Lower leg skin (tissue), 4 donors: ENCODE measurements at regions of chr3 and their contacts with region 1.

Region 1: DNA sequence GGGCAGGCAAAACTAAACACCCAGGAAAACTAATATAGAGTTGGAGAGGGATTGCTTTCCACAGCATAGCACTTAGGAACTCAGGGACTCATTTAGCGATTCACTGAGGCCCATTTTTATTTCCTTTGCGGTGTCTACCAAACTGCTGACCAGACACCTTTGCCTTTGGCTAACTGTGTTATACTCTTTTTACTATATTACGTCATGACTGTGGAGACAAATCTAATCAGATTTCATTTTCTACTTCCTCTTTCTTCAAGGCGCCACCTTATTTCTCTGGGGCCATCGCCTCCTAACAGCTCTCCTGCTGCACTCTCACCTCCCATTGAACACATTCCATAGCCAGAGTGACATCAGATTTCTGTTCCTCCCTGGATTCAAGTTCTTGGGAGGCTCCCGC is 215.7 kb upstream of the WNT5A start:
- DNase-seq: no peak
- H3K4me3 ChIP-seq: no peak overlapping the region
- CTCF ChIP-seq: no peak
- POLR2A ChIP-seq: no peak

Region 2: DNA sequence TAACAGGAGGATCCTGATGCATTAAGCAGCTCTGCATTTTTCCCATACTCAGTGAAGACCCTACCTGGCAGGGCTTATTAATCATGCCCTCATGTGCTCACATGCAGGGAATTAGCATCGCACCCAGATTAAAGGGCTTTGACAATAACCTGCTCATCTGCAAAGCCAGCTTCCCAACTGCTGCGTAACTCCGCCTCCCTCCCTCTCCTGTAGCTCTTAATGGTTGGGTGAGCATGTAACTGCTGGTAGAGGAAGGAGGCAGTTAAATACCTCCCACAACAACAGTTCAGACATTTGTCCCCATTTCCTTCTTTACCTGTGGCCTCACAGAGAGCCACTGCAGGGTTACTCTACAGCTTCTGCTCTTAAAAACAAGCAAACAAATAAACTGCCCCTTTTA is 12.1 kb before region 1 on chr3:
- intact Hi-C with region 1: loop called (anchors 1 kb)
- DNase-seq: no peak
- H3K4me3 ChIP-seq: no peak overlapping the region
- CTCF ChIP-seq: no peak
- POLR2A ChIP-seq: no peak